Right ventricle myocardium inferior (tissue), 1 donor: ENCODE measurements at regions of chr11 and their contacts with region 1.

Region 1: DNA sequence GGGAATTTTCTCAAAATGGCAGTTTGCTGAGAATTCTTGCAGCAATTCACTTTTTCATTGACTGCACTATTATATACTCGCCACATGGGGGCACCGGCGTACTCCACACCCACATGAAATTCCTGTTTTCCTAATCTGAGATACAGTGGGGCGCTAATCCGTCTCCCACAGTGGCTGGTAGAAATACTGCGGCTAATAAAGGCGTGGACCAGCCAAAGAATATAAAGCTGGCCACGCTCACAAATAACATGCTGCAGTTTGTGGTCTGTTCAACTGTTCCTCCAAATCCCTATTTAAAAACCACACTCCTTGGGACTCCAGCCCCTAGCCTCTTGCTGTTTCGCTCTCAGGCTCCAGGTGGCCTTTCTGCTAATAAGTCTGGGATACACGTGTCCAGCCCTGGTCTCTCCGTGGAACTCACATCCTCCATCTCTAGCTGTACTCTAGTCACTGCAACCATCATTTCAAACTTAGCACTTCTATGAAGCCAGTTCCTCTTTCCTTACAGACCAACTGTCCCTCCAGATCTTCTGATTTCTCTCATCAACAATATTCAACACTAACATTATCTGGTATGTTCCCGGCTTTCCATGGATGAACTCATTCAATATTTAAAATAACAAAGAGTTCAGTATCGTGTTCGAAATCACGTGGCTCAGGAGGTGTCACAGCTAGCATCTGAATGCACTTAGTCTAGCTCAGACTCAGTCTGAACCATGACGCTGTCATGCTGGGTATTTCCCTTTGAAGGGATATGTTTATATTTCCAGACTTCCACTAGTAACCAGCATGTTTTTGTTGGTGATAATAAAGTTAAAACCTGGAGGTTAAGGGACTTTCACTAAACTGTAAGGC is 22.0 kb downstream of the TBRG1 start:
- DNase-seq: peak; percentile 82
- ATAC-seq: peak; percentile 79

Region 2: DNA sequence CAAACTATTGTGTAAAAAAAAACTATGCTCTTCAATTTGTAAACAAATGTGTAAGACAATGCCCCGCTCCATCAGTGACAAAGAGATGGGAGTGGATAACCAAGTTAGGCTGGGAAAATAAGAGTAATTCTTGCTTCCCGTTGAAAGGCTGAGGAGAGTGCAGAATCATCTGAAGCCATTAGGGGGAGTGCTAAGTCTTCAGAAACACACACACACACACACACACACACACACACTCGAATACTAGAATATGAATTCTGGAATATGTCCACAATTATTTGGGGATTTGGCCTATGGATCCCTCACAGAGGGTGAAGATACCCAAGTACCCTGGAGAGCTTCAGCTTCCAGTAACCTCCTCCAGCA is 192.8 kb after region 1 on chr11:
- intact Hi-C with region 1: loop called (anchors 1 kb)
- DNase-seq: no peak
- ATAC-seq: peak; percentile 66